ENCODE measurements at regions of chr3 and their contacts with region 1.

Region 1: GRCh38 chr3:101195951-101196713 is 124.2 kb downstream of the IMPG2 start:
- DNase-seq: no peak
- ATAC-seq: peak; percentile 65

Region 2: GRCh38 chr3:100893590-100893989 is 302.5 kb before region 1 on chr3:
- intact Hi-C with region 1: loop called in 1 of 2 experiments (anchors 10 kb)
- DNase-seq: peak in 1 of 2 donors; percentile 16
- ATAC-seq: no peak

Region 3: DNA sequence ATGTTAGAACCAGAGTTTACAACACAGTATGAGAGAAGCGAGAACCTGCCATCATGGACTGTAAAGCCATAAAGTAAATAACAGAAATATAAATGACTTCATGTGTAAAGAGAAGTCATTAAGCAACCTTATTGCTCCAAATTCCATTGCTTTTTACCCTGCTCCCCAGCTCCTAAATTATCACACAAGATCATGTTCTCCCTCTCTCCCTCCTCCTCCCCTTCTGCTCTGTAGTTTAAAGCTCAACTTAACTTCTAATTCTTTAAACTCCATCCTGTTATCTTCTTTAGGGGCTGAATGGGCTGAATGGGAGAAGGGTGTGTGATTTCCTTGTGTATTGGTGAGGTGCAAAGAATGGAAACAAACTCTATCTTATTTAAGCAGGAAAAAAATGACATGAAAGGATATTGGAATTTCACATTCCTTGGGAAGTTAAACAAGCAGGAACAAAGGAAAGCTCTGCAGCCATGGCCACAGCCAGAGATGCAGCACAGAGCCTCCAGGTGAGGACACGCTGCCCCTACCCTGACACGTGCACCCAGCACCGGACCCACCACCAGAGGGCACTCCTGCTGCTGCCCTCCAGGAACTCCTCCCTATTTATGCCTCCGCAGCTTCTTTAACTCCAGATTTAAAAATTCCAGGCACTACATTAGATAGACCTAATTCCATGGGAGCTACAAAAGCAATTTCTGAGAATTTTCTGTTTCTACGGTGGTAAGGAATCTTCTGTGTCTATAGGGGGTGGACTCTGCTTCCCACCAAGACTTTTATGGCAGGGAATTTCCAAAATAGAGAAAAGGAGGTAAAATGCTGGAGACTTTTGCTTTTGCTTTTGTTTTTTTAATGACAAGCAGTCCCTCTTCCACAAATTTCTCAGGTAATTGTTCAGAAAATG is 126.0 kb before region 1 on chr3:
- intact Hi-C with region 1: loop called in 1 of 2 experiments (anchors 5 kb)
- DNase-seq: peak; percentile 79 to 87
- ATAC-seq: peak; percentile 90